ENCODE measurements at regions of chr11 and their contacts with region 1.

Region 1: GRCh38 chr11:123083623-123084029 is 21.7 kb upstream of the HSPA8 start:
- DNase-seq: peak; percentile 83
- ATAC-seq: peak; percentile 67
- H3K4me3 Mint-ChIP-seq: peak overlapping the region; percentile 50
- H3K27ac Mint-ChIP-seq: peak overlapping the region; percentile 85
- H3K4me1 Mint-ChIP-seq: peaks cover 42% of the 10 kb centered on the region
- H3K27me3 Mint-ChIP-seq: no peaks in the 10 kb centered on the region

Region 2: DNA sequence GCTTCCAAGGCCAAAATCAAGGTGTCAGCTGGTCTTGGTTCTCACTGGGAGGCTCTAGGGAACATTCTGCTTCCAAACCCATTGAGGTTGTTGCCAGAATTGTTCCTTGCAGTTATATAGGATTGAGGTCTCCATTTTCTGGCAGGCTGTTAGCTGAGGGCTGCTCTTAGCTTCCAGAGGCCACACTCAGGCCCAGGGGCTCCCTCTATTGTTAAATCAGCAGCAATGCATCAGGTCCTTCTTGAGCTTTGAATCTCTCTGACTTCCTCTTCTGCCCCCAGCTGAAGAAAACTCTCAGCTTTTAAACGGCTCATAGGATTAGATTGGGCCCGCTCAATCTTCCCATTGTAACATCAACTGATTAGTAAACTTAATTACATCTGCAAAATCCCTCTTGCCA is 62.7 kb before region 1 on chr11:
- CTCF ChIA-PET with region 1: no interaction called
- DNase-seq: peak; percentile 53
- ATAC-seq: peak; percentile 86
- H3K4me3 Mint-ChIP-seq: no peak overlapping the region
- H3K27ac Mint-ChIP-seq: no peak overlapping the region
- H3K4me1 Mint-ChIP-seq: peaks cover 9% of the 10 kb centered on the region
- H3K27me3 Mint-ChIP-seq: peaks cover 9% of the 10 kb centered on the region

Region 3: GRCh38 chr11:123069908-123070821 is 13.5 kb before region 1 on chr11:
- CTCF ChIA-PET with region 1: interaction called, 12 read pairs
- DNase-seq: no peak
- ATAC-seq: peak; percentile 72
- H3K4me3 Mint-ChIP-seq: peak overlapping the region; percentile 72
- H3K27ac Mint-ChIP-seq: peak overlapping the region; percentile 100
- H3K4me1 Mint-ChIP-seq: peaks cover 48% of the 10 kb centered on the region
- H3K27me3 Mint-ChIP-seq: no peaks in the 10 kb centered on the region

Measured in activated CD8-positive, alpha-beta memory T cell treated with anti-CD3 and anti-CD28 coated beads, Interleukin-2, amount 10 ng/mL, durations not matched to agents 7 days and 5 days (primary cell).